Activated B cell treated with CpG ODN at 0.5 μM for 24 hours (primary cell): ENCODE measurements at regions of chr7 and their contacts with region 1.

Region 1: DNA sequence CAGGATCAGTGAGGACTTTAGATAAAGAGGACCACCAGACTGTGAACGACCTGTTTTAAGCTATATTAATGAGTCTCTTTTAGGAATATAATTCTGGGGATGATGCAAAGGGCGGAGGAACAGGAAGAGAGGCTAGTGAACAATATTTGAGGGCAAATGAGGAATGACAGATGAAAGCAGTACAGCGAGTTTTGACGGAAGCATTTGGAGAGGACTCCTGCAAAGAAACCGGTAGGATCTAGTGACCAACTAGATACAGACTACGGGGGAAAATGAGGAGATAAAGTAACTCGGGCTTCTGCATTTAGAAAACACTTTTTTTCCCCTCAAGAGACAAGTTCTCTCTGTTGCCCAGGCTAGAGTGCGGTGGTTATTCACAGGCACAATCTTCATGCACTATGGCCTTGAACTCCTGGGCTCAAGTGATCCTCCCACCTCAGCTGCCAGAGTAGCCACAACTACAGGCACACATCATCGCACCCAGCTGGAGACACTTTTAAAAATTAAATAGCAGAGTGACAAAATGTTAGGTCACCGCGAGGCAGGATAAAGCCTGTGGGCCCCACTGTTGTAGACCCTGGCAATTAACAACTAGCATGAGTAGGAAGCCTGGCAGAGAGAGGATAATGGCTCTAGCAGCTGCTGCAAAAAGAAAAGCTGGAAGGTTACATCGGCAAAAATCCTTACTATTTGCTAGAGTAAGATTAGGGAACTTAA is 143.2 kb downstream of the SRPK2 start:
- DNase-seq: no peak
- ATAC-seq: peak; percentile 25
- H3K4me3 Mint-ChIP-seq: no peak overlapping the region
- H3K27ac Mint-ChIP-seq: no peak overlapping the region
- H3K4me1 Mint-ChIP-seq: peaks cover 28% of the 10 kb centered on the region
- H3K27me3 Mint-ChIP-seq: no peaks in the 10 kb centered on the region
- CTCF ChIP-seq: no peak

Region 2: GRCh38 chr7:105210721-105211205 is 34.8 kb before region 1 on chr7:
- CTCF ChIA-PET with region 1: no interaction called
- POLR2A ChIA-PET with region 1: no interaction called
- intact Hi-C with region 1: loop called (anchors 5 kb)
- DNase-seq: no peak
- ATAC-seq: peak; percentile 77
- H3K4me3 Mint-ChIP-seq: peak overlapping the region; percentile 50
- H3K27ac Mint-ChIP-seq: peak overlapping the region; percentile 90
- H3K4me1 Mint-ChIP-seq: peaks cover 86% of the 10 kb centered on the region
- H3K27me3 Mint-ChIP-seq: no peaks in the 10 kb centered on the region
- CTCF ChIP-seq: no peak

Region 3: DNA sequence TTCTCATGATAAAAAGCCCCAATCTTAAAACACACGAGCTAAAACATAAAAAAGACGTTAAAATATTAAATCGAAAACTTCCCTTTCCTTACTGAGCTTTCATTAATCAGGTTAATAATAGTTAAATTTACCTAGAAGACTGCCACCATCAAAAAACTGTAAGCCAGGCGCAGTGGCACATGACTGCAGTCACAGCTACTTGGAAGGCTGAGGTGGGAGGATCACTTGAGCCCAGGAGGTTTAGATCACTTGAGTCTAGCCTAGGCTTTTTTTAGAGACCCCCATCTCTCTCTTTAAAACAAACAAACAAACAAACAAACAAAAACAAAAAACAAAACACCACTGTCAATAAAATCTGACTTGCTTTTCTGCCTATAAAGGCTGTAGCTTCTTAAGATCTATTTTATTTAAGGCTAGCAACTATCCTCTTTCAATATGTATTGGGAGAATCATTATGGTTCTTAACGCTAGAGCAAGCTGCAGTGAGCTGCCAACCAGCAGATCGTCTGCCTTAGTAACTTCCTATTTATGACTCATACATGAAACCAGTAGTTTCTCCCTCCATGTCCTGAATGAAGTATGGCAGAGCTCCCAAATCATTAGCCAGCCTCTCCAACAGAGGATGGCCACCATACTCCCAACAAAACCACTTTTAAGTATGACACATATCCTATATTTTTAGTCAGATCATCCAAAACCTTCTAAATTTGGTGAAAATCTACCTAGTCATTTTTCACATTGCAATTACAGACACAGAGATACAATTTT is 20.5 kb before region 1 on chr7:
- CTCF ChIA-PET with region 1: no interaction called
- POLR2A ChIA-PET with region 1: interaction called, 4 read pairs
- intact Hi-C with region 1: loop called (anchors 2 kb)
- DNase-seq: no peak
- ATAC-seq: peak; percentile 95
- H3K4me3 Mint-ChIP-seq: peak overlapping the region; percentile 42
- H3K27ac Mint-ChIP-seq: peak overlapping the region; percentile 73
- H3K4me1 Mint-ChIP-seq: peaks cover 20% of the 10 kb centered on the region
- H3K27me3 Mint-ChIP-seq: no peaks in the 10 kb centered on the region
- CTCF ChIP-seq: no peak

Region 4: GRCh38 chr7:105261688-105262087 is 16.1 kb after region 1 on chr7:
- CTCF ChIA-PET with region 1: no interaction called
- POLR2A ChIA-PET with region 1: no interaction called
- intact Hi-C with region 1: no loop called
- DNase-seq: no peak
- ATAC-seq: no peak
- H3K4me3 Mint-ChIP-seq: no peak overlapping the region
- H3K27ac Mint-ChIP-seq: no peak overlapping the region
- H3K4me1 Mint-ChIP-seq: peaks cover 48% of the 10 kb centered on the region
- H3K27me3 Mint-ChIP-seq: no peaks in the 10 kb centered on the region
- CTCF ChIP-seq: no peak

Region 5: GRCh38 chr7:105278973-105279687 is 33.6 kb after region 1 on chr7:
- CTCF ChIA-PET with region 1: no interaction called
- POLR2A ChIA-PET with region 1: no interaction called
- intact Hi-C with region 1: loop called (anchors 2 kb)
- DNase-seq: no peak
- ATAC-seq: no peak
- H3K4me3 Mint-ChIP-seq: no peak overlapping the region
- H3K27ac Mint-ChIP-seq: no peak overlapping the region
- H3K4me1 Mint-ChIP-seq: peaks cover 17% of the 10 kb centered on the region
- H3K27me3 Mint-ChIP-seq: no peaks in the 10 kb centered on the region
- CTCF ChIP-seq: no peak